ENCODE measurements at regions of chr3 and their contacts with region 1.

Region 1: DNA sequence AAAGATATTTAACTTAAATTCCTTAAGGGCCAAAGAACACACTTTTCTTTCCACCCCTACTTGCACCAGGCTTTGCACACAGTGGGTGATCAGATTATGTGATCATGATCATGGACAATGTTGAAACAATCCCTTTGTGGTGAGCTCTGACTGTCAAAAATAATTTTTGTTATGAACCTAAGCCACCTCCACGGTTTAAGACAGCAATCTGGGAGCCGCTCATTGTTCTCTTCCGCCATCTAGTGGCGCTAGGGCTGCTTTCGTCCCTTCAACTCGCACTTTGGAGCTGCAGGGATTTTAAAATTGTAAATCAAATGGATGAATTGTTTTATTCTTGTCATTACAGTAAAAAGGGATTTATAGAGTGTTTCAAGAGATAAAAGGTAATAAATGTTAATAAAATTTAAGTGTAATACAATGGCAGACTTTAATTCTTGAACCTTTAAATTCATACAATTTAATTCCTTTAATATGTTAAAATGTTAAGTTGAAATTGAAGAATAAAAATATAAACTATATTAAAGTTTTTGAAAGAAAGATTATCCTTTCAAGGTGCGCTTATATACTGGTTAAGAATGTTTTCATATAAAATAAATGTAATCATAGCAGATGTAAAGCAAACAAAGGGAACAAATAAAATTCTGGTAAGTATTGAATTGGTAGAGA is 45.3 kb upstream of the ARL6 start:
- DNase-seq: peak; percentile 51 to 78 (median 67)
- ATAC-seq: peak; percentile 61 to 72
- H3K4me3 ChIP-seq: no peak overlapping the region
- H3K27ac ChIP-seq: no peak overlapping the region
- H3K4me1 ChIP-seq: no peaks in the 10 kb centered on the region
- H3K27me3 ChIP-seq: no peaks in the 10 kb centered on the region

Region 2: DNA sequence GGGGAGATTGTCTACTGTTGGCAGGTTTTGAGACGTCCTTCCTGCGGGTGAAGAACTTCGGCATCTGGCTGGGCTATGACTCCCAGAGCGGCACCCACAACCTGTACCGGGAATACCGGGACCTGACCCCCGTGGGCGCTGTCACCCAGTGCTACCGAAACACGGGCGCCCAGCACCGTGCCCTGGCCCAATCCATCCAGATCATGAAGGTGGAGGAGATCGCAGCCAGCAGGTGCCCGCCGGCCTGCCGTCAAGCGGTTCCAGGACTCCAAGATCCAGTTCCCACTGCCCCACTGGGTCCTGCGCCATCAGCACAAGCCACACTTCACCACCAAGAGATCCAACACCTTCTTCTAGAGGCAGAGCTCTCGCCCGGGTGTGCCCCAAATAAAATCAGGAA is 1099.8 kb before region 1 on chr3:
- intact Hi-C with region 1: no loop called
- DNase-seq: no peak
- ATAC-seq: no peak
- H3K4me3 ChIP-seq: no peak overlapping the region
- H3K27ac ChIP-seq: no peak overlapping the region
- H3K4me1 ChIP-seq: no peaks in the 10 kb centered on the region
- H3K27me3 ChIP-seq: no peaks in the 10 kb centered on the region

Region 3: DNA sequence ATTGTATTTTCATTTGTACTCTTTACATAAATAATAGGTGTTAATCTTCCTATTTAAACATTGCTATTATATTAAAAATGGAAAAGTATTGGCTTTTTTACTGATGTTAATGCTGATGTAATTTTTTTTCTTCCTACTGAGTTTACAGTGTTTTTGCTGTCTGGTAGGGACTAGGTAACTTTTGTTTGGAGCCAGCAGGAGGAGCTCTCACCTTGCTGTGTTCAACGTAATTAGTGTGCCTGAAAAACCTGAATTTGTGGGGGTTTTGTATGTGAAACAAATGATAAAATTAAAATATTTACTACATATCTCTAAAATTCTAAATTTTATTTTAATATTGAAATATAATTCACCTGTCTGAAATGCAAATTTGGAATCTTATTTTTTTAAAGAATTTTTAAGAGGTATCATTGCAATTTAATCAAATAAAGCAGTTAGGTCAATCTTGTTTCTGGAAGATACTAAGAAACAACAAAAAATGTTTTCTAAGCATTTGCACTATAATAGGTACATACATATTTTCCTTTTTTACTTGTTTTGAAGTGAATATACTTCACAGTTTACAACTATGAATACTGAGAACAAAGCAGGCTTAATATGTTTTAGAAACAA is 856.1 kb before region 1 on chr3:
- intact Hi-C with region 1: loop called in 2 of 4 experiments (anchors 5 to 10 kb)
- DNase-seq: no peak
- ATAC-seq: no peak
- H3K4me3 ChIP-seq: no peak overlapping the region
- H3K27ac ChIP-seq: no peak overlapping the region
- H3K4me1 ChIP-seq: no peaks in the 10 kb centered on the region
- H3K27me3 ChIP-seq: no peaks in the 10 kb centered on the region

Region 4: DNA sequence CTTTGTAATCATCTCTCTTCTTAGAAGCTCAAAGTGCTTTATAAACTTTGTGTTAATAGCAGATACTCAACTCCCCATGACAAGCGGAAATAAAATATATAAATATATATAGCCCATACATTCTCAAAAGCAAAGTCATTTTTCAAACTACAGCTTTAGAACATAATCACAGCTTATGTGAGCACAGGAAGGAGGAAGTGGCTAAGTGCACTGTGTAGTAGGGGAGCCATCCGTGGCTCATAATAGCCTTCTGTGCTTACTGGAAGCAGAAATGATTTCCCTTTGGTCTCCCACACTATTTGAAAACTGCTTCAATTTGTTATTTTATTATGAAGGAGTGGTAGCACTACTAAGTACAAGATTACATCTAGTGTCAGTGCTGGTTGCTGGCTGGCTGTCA is 106.2 kb before region 1 on chr3:
- intact Hi-C with region 1: no loop called
- DNase-seq: no peak
- ATAC-seq: no peak
- H3K4me3 ChIP-seq: no peak overlapping the region
- H3K27ac ChIP-seq: no peak overlapping the region
- H3K4me1 ChIP-seq: no peaks in the 10 kb centered on the region
- H3K27me3 ChIP-seq: no peaks in the 10 kb centered on the region

Measured in right cardiac atrium (tissue), 5 donors.